Sciatic nerve (tissue), 2 donors: ENCODE measurements at regions of chr4 and their contacts with region 1.

Region 1: DNA sequence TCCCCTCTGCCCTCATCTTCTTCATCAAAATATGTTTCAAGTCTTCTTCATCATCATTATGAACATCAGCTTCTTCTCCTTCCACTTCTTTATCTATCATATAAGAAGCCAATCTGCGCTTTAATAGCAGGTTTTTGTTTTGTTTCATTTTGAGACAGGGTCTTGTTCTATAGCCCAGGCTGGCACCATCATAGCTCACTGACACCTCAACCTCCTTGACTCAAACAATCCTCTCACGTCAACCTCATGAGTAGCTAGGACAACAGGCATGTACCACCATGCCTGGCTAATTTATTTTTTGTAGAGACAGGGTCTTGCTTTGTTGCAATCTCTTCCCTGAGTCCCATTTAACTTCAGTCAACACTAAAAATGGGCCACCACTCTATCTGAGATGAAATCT is 27.0 kb downstream of the PRDM5 start:
- DNase-seq: no peak
- ATAC-seq: no peak

Region 2: GRCh38 chr4:121869841-121870656 is 974.5 kb after region 1 on chr4 and contains the start of gene BBS7:
- intact Hi-C with region 1: loop called (anchors 5 kb)
- DNase-seq: peak; percentile 99
- ATAC-seq: peak; percentile 100
- total RNA-seq, gene BBS7: 24.1 TPM